HepG2 (cell line): ENCODE measurements at regions of chr13 and their contacts with region 1.

Region 1: GRCh38 chr13:111168107-111168506 is 53.0 kb downstream of the ARHGEF7 start:
- DNase-seq: no peak
- ATAC-seq: no peak
- H3K4me3 ChIP-seq: no peak overlapping the region
- H3K27ac ChIP-seq: no peak overlapping the region
- H3K4me1 ChIP-seq: peaks cover 28% of the 10 kb centered on the region
- H3K27me3 ChIP-seq: no peaks in the 10 kb centered on the region
- CTCF ChIP-seq: no peak
- EP300 ChIP-seq: no peak
- POLR2A ChIP-seq: no peak
- RAD21 ChIP-seq: no peak

Region 2: GRCh38 chr13:111181977-111182376 is 13.9 kb after region 1 on chr13:
- CTCF ChIA-PET with region 1: no interaction called
- POLR2A ChIA-PET with region 1: no interaction called
- in situ Hi-C with region 1: no loop called
- intact Hi-C with region 1: loop called (anchors 1 kb)
- DNase-seq: no peak
- ATAC-seq: no peak
- H3K4me3 ChIP-seq: no peak overlapping the region
- H3K27ac ChIP-seq: no peak overlapping the region
- H3K4me1 ChIP-seq: peaks cover 16% of the 10 kb centered on the region
- H3K27me3 ChIP-seq: no peaks in the 10 kb centered on the region
- CTCF ChIP-seq: no peak
- EP300 ChIP-seq: no peak
- POLR2A ChIP-seq: no peak
- RAD21 ChIP-seq: no peak